Posterior vena cava (tissue), 2 donors: ENCODE measurements at regions of chr16 and their contacts with region 1.

Region 1: DNA sequence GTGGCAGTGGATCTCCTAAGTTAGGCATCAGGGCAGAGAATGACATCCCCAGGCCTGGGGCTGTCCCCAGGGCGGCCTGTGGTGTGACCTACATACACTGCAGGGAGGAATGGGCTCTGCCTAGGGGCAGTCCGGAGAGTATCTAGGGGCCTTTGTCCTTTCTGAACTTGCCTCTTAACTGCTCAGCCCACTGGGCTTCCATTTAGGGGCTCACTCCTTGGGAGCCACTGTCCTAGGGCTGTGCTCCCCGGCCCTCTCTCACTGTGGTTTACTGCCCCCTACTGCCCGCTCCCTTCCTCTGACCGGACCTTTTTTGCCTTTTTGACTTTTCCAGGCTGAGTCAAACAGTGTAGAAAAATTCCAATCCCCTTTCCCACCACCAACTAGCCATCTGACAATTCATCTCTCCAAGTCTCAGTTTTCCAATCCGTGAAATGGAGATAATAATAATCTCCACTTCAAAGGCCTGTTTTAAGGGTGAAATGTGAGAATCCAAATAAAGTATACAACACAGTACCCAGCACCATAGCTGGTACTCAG is 66.8 kb downstream of the DNAH3 start:
- DNase-seq: peak; percentile 87

Region 2: GRCh38 chr16:20806168-20807050 is 277.4 kb before region 1 on chr16 and contains the starts of genes ERI2 and REXO5:
- intact Hi-C with region 1: loop called in 1 of 2 experiments (anchors 10 kb)
- DNase-seq: peak; percentile 97
- total RNA-seq, gene ERI2: 7.8 to 13.6 TPM
- total RNA-seq, gene REXO5: 1.0 to 2.2 TPM

Region 3: GRCh38 chr16:20849587-20850390 is 234.0 kb before region 1 on chr16:
- intact Hi-C with region 1: loop called (anchors 5 kb)
- DNase-seq: peak; percentile 89

Region 4: DNA sequence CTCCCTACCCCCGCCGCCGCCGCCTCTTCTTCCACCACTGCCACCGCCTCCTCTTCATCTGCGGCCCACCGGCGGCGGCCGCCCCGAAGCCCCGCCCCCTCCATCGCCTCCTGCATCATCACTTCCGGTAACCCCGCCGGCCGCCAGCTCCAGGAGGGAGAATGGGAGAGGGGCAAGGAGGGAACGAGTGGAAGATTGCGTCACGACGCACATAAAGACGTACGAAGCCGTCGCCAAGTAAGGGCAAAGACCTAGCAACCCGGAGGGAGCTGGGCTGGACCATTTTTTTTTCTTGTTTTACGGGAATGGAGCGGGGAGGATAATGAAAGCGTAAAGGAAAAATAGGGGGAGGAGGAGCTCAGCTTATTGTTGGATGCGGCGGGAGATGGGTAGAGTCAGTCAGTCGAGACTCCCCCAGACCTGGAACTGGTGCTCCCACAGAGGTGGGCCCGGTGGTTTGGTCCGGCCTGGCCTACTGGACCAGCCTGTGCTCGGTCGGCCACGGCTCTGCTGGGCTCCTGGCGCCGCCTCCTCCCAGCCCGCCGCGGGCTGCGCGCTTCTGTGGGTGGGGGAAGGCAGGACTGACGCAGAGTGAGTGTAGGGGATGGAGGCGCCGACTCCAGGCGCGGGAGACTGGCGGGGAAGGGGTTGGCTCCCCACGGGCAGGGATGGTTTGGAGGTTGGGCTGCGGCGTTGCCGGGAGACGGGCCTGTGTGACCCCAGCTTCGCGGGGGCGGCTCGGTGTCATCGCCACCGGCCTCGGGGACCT is 183.3 kb before region 1 on chr16 and contains the starts of genes DCUN1D3 and LYRM1:
- intact Hi-C with region 1: no loop called
- DNase-seq: peak; percentile 99
- total RNA-seq, gene DCUN1D3: 27.7 to 30.6 TPM
- total RNA-seq, gene LYRM1: 32.7 to 38.8 TPM

Region 5: DNA sequence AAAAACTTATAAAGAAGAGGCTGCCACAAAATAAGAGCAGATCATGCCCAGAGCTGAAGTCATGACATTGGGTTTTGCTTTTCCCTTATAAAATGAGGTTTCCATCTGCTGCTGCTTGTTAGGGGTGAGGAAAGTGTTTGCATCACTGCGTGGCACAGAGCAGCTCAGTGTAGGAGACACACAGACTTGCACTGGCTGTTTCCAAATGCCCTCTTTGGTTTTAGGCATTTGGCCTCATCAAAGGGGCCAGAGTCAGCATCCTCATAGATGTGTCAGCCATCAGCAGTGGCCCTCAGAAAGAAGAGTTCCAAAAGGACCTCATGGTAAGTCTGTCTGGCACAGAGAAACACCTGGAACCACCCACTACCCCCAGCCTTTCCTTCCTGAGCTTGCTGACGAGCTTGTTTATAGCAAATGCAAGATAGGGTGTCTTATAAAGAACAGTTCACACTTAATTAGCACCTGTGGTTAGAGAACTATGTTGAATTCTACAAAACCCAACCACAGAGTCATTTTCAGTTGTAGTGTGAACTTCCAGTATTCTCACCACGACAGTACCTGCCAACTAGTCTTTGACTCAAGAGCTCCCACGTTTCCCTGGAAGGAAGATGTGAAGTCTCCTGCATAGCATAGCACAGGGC is 1025.6 kb after region 1 on chr16:
- intact Hi-C with region 1: no loop called
- DNase-seq: no peak